ENCODE measurements at regions of chr15 and their contacts with region 1.

Region 1: GRCh38 chr15:73483053-73483452 is 40.1 kb downstream of the REC114 start:
- DNase-seq: no peak
- H3K4me3 ChIP-seq: no peak overlapping the region
- H3K27ac ChIP-seq: no peak overlapping the region
- H3K4me1 ChIP-seq: no peaks in the 10 kb centered on the region
- CTCF ChIP-seq: no peak

Region 2: GRCh38 chr15:73325193-73325861 is 157.7 kb before region 1 on chr15:
- CTCF ChIA-PET with region 1: no interaction called
- POLR2A ChIA-PET with region 1: no interaction called
- intact Hi-C with region 1: no loop called
- DNase-seq: peak; percentile 8
- H3K4me3 ChIP-seq: no peak overlapping the region
- H3K27ac ChIP-seq: no peak overlapping the region
- H3K4me1 ChIP-seq: no peaks in the 10 kb centered on the region
- CTCF ChIP-seq: peak; percentile 56

Region 3: DNA sequence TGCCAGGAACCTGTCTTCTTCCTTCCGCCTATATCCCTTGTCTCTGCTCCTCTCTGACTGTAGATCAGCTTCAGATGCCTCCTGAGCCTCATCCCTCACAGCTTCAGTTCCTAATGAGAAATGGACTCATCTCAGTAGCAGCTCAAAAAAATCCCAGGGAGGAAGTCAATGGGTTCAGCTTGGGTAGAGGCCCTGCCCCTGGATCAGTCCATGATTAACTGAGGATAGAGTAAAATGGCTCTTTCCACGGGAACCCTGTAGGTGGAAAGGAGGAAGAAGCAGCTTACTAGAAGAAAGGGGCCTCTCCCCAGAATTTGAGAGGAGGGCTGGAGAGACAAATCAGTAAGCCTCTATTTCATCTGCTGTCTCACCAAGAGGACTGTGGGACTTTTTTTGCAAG is 87.4 kb before region 1 on chr15:
- CTCF ChIA-PET with region 1: no interaction called
- POLR2A ChIA-PET with region 1: interaction called, 10 read pairs
- intact Hi-C with region 1: no loop called
- DNase-seq: no peak
- H3K4me3 ChIP-seq: no peak overlapping the region
- H3K27ac ChIP-seq: no peak overlapping the region
- H3K4me1 ChIP-seq: no peaks in the 10 kb centered on the region
- CTCF ChIP-seq: no peak

Region 4: DNA sequence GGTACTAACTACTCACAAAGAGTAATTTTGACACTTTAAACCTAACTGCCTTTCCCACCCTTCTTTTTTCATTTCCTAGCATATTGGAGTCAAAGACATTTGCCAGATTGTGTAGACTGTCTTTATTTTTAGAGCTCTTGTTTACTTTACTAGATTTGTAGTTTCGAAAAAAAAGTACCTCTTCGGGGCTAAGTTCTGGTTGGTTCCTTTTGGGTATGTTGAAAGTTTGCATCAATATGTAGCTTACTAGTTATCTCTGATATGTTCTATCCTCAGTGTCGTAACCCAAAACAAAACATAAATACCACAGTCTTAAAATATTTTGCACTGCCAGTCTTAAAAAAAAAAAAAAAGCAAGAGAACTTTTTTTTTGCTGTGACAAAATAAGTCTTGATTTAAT is 12.1 kb after region 1 on chr15:
- CTCF ChIA-PET with region 1: no interaction called
- POLR2A ChIA-PET with region 1: interaction called, 10 read pairs
- intact Hi-C with region 1: no loop called
- DNase-seq: no peak
- H3K4me3 ChIP-seq: no peak overlapping the region
- H3K27ac ChIP-seq: no peak overlapping the region
- H3K4me1 ChIP-seq: no peaks in the 10 kb centered on the region
- CTCF ChIP-seq: no peak

Measured in OCI-LY7 (cell line).